ENCODE measurements at regions of chr6 and their contacts with region 1.

Region 1: DNA sequence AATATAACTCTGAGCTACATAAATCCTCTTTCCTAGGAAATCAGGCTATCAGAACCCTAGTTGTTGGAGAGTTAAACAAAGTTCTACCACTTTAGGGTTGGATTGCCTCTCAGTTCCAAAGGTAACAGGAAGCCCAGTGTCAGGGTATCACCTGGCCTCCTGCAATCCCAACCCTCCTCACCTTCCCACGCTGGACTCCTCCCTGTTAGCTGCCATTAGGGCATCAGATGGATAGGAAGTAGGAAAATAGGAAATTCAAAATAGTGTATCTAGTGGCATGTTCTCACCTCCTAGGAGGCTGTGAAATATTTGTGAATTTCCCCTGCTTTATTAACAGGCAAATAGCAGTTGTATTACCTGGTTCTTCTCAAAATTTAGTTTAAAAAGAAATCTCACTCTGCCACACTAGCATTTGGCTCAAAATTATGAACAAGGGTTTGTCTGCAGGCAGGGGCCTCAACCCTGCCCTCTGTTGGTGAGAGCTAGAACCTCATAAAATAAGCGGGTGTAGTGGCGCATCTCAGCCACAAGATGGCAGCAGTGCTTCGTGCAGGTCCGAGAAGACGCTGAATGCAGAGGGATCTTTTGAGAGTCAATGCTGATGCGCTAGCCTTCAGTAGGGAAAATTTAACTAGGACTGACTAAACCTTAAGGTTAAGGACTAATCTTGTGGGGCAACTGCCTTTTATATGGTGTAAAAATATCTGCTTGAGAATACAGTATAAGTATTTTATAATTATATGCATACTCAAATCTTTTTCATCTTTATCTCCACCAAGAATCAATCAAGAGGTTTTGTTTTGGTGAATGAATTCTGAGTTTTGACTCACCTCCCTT is 209.8 kb upstream of the KCNQ5 start:
- DNase-seq: peak; percentile 45 to 51
- ATAC-seq: peak in 7 of 8 donors; percentile 58 to 84 (median 69)
- H3K4me3 ChIP-seq: no peak overlapping the region
- H3K27ac ChIP-seq: no peak overlapping the region
- H3K4me1 ChIP-seq: no peaks in the 10 kb centered on the region
- H3K27me3 ChIP-seq: peaks cover 0 to 31% (median 23%) of the 10 kb centered on the region in 7 donors
- CTCF ChIP-seq: peak; percentile 100

Region 2: DNA sequence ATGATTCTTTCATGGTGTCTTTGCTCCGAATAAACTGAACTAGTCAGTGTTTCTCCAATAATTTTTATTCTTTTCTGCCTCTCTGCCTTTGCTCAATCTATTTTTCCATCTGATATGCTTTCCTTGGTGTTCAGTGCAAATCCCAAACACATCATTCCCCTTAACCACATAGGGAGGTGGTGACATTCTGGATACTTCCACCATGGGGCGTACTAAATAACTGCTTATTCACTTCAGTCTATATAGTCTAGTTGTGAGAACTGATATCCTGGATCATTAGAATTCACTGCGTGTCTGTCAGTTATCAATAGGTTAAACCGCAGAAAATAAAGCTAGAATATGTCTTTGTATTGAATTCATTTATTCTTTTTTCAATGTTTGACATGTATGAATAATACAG is 292.9 kb after region 1 on chr6:
- intact Hi-C with region 1: no loop called
- DNase-seq: no peak
- ATAC-seq: no peak
- H3K4me3 ChIP-seq: no peak overlapping the region
- H3K27ac ChIP-seq: no peak overlapping the region
- H3K4me1 ChIP-seq: no peaks in the 10 kb centered on the region
- H3K27me3 ChIP-seq: no peaks in the 10 kb centered on the region
- CTCF ChIP-seq: no peak

Region 3: GRCh38 chr6:73129653-73130443 is 717.8 kb after region 1 on chr6:
- intact Hi-C with region 1: loop called in 7 of 10 experiments (anchors 2 to 10 kb)
- DNase-seq: peak; percentile 59 to 67
- ATAC-seq: peak in 7 of 8 donors; percentile 39 to 79 (median 59)
- H3K4me3 ChIP-seq: no peak overlapping the region
- H3K27ac ChIP-seq: no peak overlapping the region
- H3K4me1 ChIP-seq: no peaks in the 10 kb centered on the region
- H3K27me3 ChIP-seq: peaks cover 0 to 15% (median 0%) of the 10 kb centered on the region in 7 donors
- CTCF ChIP-seq: peak; percentile 34 to 91 (median 72)

Region 4: DNA sequence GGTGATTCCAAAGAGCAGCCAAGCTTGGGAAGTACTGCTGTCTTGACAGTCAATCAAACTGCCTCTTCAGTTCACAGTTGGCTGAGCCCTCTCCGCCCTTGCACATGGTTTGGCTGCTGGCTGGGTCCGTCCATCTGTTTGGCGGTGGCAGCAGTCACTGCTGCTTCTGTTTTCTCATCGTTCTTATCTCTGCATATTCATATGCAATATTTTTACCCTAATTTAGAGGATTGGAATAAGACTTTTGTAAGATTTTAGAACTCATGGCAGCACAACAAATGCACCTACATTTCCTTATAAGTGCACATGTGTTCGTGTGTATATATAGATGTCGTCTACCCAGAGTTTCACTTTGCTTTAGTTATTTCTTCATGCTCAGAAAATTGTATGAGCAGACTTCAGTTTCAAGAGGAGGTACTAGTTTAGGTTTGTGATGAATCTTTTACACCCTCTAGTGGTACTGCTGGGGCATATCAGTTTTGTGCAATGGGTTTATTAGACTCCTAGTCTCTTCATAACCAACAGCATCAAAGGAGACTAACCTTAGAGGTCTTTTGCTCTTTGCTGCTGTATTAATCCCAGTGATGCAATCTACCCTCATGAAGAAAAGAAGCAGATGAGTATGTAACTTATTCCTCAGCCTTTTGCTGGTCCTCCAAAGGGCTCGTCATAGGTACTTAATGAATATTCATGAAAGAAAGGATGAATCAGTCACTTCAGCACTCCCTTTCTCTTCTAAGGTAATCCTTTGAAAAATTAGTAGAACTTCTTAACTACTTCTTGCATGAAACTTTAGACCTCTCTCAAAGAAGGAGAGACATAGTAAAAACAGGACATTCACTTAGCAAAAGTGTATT is 768.9 kb after region 1 on chr6:
- intact Hi-C with region 1: loop called in 9 of 10 experiments (anchors 2 to 10 kb)
- DNase-seq: no peak
- ATAC-seq: peak in 6 of 8 donors; percentile 59 to 79 (median 74)
- H3K4me3 ChIP-seq: peak overlapping the region in 5 of 10 donors; percentile 15 to 37 (median 30)
- H3K27ac ChIP-seq: no peak overlapping the region
- H3K4me1 ChIP-seq: peaks cover 0 to 4% (median 0%) of the 10 kb centered on the region in 9 donors
- H3K27me3 ChIP-seq: peaks cover 0 to 16% (median 0%) of the 10 kb centered on the region in 7 donors
- CTCF ChIP-seq: peak; percentile 24 to 76 (median 70)

Region 5: DNA sequence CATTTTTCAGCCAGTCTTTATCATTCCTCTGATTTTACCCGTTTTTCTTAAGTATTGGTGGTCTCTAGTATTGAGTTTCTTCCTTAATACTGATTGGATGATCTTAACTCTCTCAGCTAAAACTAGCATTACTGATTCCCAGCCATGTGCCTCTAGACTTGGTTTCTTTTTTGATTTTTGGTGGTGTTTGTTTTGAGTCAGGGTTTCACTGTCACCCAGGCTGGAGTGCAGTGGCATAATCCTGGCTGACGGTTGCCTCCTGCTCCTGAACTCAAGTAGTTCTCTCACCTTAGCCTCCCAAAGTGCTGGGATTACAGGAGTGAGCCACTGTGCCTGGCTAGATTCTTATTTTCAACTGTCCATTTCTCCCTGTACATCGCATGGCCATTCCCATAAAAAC is 917.1 kb after region 1 on chr6:
- intact Hi-C with region 1: loop called in 6 of 10 experiments (anchors 5 to 10 kb)
- DNase-seq: no peak
- ATAC-seq: no peak
- H3K4me3 ChIP-seq: no peak overlapping the region
- H3K27ac ChIP-seq: no peak overlapping the region
- H3K4me1 ChIP-seq: no peaks in the 10 kb centered on the region
- H3K27me3 ChIP-seq: peaks cover 0 to 43% (median 22%) of the 10 kb centered on the region in 7 donors
- CTCF ChIP-seq: no peak

Measured in heart right ventricle (tissue), 16 donors.